ENCODE measurements at regions of chr16 and their contacts with region 1.

Region 1: GRCh38 chr16:30534368-30535105 is at the start of gene ZNF747:
- DNase-seq: peak; percentile 93
- H3K4me3 Mint-ChIP-seq: peak within 1 kb of the TSS; percentile 87
- H3K27ac Mint-ChIP-seq: peak within 1 kb of the TSS; percentile 97
- H3K4me1 Mint-ChIP-seq: peaks cover 45% of the 10 kb centered on the region
- H3K27me3 Mint-ChIP-seq: no peaks in the 10 kb centered on the region
- total RNA-seq, gene ZNF747: 10.6 to 10.7 TPM

Region 2: DNA sequence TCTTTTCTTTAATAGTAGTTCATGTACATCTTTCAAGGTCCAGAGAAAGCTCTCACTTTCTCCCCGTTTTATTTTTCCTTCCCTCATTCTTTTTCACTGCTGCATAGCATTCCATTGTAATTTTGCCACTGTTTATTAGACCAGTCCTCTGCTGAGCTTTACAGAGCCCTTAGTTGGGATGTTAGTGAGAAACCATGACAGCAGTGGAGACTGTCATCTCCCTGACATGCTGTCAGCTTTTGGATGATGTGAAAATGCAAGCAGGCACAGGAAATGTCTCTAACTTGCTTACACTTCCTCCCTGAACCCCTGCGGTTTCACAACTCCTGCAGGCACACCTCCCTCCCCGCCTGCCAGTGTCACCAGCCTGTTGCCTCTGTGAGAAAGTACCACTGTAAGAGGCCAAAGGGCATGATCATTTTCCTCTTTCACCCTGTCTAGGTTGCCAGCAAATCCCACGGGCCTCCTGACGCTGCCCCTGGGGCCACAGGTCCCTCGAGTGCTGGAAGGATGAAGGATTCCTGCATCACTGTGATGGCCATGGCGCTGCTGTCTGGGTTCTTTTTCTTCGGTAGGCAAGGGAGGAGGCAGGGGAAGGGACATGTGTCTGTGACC is 62.1 kb before region 1 on chr16 and contains the start of gene ITGAL:
- CTCF ChIA-PET with region 1: interaction called, 6 read pairs
- POLR2A ChIA-PET with region 1: interaction called, 33 read pairs
- DNase-seq: peak; percentile 92
- H3K4me3 Mint-ChIP-seq: peak within 1 kb of the TSS; percentile 98
- H3K27ac Mint-ChIP-seq: peak within 1 kb of the TSS; percentile 96
- H3K4me1 Mint-ChIP-seq: peaks cover 58% of the 10 kb centered on the region
- H3K27me3 Mint-ChIP-seq: no peaks in the 10 kb centered on the region
- total RNA-seq, gene ITGAL: 583 to 586 TPM

Region 3: GRCh38 chr16:30551781-30552180 is 17.2 kb after region 1 on chr16:
- CTCF ChIA-PET with region 1: interaction called, 90 read pairs
- POLR2A ChIA-PET with region 1: interaction called, 189 read pairs
- DNase-seq: peak; percentile 78
- H3K4me3 Mint-ChIP-seq: peak overlapping the region; percentile 58
- H3K27ac Mint-ChIP-seq: peak overlapping the region; percentile 98
- H3K4me1 Mint-ChIP-seq: peaks cover 57% of the 10 kb centered on the region
- H3K27me3 Mint-ChIP-seq: no peaks in the 10 kb centered on the region

Region 4: DNA sequence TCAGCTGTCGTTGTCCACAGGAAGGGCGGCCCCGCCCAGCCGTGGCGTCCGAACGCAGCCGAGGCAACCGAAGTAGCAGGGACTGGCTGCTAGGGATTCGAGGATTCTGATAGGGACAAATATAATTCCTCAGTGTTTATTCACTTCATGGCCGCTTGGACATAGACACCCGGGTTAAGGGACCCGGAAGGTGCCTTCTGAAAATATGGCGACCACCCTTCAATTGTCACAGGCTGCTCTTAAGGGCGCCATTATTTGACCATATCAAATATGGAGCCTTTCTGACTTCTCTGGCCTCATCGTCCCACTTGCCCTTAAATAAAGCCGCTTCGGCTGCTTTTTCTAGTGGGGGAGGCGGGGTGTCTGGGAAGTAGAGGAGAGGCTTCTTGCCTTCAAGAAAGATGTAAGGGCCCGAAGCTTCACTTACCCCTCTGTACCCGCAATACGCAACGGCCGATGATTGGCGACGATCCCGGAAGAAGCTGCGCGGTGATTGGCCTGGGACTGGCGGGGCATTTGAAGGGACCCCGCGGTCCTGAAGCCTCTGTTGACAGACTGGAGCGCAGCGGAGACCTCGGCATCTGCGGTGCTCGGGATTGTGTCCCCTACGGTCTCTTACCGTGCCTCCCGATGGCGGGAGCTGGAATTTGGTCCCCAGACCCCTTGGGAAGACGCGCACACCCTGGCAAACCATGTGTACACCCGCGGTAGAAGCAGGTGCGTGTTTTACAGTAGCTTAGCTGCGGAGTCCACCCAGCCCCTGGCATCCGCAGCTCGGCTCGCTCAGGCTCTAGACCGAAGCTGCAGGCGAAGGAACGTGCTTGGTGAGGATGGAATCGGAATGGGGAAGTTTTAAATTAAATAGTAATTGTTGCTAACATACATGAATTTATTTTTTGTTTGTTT is 37.4 kb after region 1 on chr16 and contains the start of gene ZNF688:
- CTCF ChIA-PET with region 1: interaction called, 15 read pairs
- POLR2A ChIA-PET with region 1: interaction called, 93 read pairs
- DNase-seq: peak; percentile 96
- H3K4me3 Mint-ChIP-seq: peak within 1 kb of the TSS; percentile 82
- H3K27ac Mint-ChIP-seq: peak within 1 kb of the TSS; percentile 90
- H3K4me1 Mint-ChIP-seq: peaks cover 55% of the 10 kb centered on the region
- H3K27me3 Mint-ChIP-seq: no peaks in the 10 kb centered on the region
- total RNA-seq, gene ZNF688: 19.2 to 22.8 TPM

Region 5: DNA sequence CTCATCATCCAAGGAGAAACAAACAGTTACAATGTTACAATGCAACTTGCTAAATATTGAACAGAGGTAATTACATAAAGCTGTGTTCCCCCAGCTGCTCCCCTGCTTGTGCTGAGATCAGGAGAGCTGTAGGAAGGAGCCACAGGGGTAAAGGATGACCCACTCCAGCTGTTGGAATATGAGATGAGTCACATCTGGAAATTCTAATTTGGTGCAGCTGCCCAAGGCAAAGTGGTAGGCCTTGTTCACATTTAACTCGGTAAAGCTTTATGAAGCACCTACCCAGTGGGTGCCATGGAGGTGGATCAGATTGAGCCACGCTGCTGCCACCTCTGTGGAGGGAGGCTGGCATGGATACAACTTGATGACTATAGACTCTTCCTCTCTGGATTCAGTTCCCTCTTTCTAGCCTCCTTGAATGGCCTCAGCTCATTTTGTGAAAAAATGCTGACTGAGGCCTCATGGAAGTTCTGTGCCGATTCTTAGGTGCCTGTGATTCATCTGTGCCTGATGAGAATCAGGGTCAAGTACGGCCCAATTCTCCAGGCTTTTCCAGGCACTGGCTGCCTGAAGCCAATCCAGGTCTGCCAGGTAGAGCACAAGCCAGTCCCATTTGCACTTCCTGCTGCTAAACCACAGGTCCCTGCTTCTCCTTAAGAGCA is 68.2 kb after region 1 on chr16:
- CTCF ChIA-PET with region 1: interaction called, 34 read pairs
- POLR2A ChIA-PET with region 1: interaction called, 20 read pairs
- DNase-seq: no peak
- H3K4me3 Mint-ChIP-seq: no peak overlapping the region
- H3K27ac Mint-ChIP-seq: no peak overlapping the region
- H3K4me1 Mint-ChIP-seq: peaks cover 11% of the 10 kb centered on the region
- H3K27me3 Mint-ChIP-seq: no peaks in the 10 kb centered on the region

Region 6: GRCh38 chr16:30615358-30616091 is 81.0 kb after region 1 on chr16:
- CTCF ChIA-PET with region 1: interaction called, 20 read pairs
- POLR2A ChIA-PET with region 1: interaction called, 22 read pairs
- DNase-seq: peak; percentile 85
- H3K4me3 Mint-ChIP-seq: no peak overlapping the region
- H3K27ac Mint-ChIP-seq: no peak overlapping the region
- H3K4me1 Mint-ChIP-seq: peaks cover 12% of the 10 kb centered on the region
- H3K27me3 Mint-ChIP-seq: peaks cover 17% of the 10 kb centered on the region

Region 7: DNA sequence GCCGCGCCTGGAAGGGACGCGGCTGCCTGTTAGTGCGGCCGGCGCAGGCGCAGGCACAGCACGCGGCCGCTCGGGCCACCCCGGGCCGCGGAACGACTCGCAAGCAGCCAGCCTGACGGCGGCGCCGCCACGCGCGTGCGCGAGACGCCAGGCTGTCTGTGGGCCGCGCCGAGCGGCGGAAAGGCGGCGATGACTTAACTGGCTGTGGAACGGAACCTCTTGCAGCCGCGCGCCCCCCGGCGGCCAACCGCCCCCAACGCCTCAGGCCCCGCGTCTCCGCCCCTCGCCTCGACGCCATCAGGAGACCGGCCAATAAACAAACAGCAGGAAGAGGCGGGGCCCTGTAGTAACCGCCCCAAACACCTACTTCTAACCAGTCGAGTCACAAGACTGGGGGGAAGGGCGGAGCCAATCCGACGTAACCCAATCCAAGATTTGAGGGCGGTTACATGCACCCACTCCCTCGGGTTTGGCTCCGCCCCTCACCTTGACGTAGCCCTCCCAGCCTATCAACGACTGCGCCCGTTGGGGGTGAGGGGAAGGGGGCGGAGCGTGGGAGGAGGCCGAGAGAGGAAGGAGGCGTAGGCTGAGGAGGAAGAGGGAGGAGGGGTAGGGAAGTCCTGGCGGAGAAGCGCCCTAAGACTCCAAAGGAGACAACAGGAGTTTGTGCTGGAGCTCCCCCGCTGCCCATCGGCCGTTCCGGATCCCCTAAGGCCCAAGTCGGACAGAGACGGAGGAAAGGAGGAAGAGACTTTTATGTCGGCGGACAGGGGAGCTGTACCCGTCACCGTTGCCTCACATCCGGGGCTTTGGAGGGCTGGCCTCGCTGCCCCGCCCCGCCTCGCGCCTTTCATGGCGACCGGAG is 123.6 kb after region 1 on chr16 and contains the start of gene FBRS:
- CTCF ChIA-PET with region 1: no interaction called
- POLR2A ChIA-PET with region 1: interaction called, 17 read pairs
- DNase-seq: peak; percentile 100
- H3K4me3 Mint-ChIP-seq: peak within 1 kb of the TSS; percentile 86
- H3K27ac Mint-ChIP-seq: peak within 1 kb of the TSS; percentile 98
- H3K4me1 Mint-ChIP-seq: peaks cover 47% of the 10 kb centered on the region
- H3K27me3 Mint-ChIP-seq: no peaks in the 10 kb centered on the region
- total RNA-seq, gene FBRS: 106 to 107 TPM